Astrocyte of the cerebellum (primary cell): ENCODE measurements at regions of chrX and their contacts with region 1.

Region 1: DNA sequence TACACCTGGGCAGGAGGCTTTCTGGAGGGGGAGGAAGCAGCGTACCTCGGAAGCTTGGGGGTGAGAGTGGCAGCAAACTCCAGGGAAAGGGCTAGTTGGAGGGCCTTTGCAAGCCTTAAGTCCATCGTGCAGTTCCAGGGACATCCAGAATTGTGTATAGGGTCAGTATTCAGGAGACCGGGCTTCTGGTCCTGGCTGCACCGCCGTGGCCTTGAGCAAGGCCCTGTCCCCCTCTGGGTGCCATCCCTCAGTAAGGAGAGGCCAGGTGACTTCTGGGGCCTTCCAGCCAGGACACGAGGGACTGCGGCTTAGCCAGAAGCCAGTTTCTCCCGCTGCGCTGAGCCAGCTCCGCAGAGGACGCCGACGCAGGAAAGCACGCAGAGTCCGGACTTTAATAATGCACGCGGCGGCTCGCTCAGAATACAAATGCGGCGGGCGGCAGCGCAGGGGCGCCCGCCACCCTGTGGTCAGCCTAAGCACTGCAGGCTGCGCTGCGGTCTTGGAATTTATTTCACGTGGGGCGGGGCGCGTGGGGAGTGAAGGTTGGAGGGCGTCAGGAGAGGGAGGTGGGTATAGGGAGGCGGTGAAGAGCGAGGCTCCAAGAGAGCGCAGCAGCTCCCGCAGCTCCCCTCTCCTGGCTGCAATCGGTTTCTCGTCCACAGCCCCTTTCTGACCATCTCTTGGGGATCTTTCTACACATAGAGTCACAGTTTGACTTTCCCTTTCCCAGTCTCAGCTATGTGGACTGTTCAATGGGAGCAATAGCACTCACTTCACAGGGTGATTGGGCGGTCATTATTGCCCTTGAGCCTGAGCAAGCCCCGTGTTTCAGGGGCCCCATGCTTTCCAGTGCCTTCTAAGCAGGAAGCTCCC is 94.1 kb upstream of the GPR50 start:
- DNase-seq: no peak
- H3K4me3 ChIP-seq: no peak overlapping the region
- CTCF ChIP-seq: peak; percentile 77

Region 2: GRCh38 chrX:150772150-150772970 is 310.0 kb before region 1 on chrX:
- in situ Hi-C with region 1: loop called (anchors 10 kb)
- DNase-seq: peak; percentile 38
- H3K4me3 ChIP-seq: no peak overlapping the region
- CTCF ChIP-seq: peak; percentile 80